PC-9 (cell line): ENCODE measurements at regions of chr21 and their contacts with region 1.

Region 1: GRCh38 chr21:33608559-33608958 is 20.1 kb upstream of the DONSON start:
- DNase-seq: no peak
- H3K4me3 ChIP-seq: no peak overlapping the region
- H3K27ac ChIP-seq: no peak overlapping the region
- H3K4me1 ChIP-seq: no peaks in the 10 kb centered on the region; the same call in 1 of the 2 replicates
- H3K27me3 ChIP-seq: no peaks in the 10 kb centered on the region
- CTCF ChIP-seq: no peak

Region 2: GRCh38 chr21:33531007-33531406 is 77.6 kb before region 1 on chr21:
- CTCF ChIA-PET with region 1: no interaction called
- POLR2A ChIA-PET with region 1: no interaction called
- intact Hi-C with region 1: no loop called
- DNase-seq: no peak
- H3K4me3 ChIP-seq: no peak overlapping the region
- H3K27ac ChIP-seq: no peak overlapping the region
- H3K4me1 ChIP-seq: no peaks in the 10 kb centered on the region
- H3K27me3 ChIP-seq: no peaks in the 10 kb centered on the region
- CTCF ChIP-seq: no peak

Region 3: GRCh38 chr21:33655591-33656221 is 47.1 kb after region 1 on chr21:
- CTCF ChIA-PET with region 1: no interaction called
- POLR2A ChIA-PET with region 1: no interaction called
- intact Hi-C with region 1: no loop called
- DNase-seq: peak; percentile 63 to 96
- H3K4me3 ChIP-seq: no peak overlapping the region; the same call in 1 of the 2 replicates
- H3K27ac ChIP-seq: peak overlapping the region; percentile 73
- H3K4me1 ChIP-seq: peaks cover 14% of the 10 kb centered on the region
- H3K27me3 ChIP-seq: no peaks in the 10 kb centered on the region
- CTCF ChIP-seq: no peak

Region 4: DNA sequence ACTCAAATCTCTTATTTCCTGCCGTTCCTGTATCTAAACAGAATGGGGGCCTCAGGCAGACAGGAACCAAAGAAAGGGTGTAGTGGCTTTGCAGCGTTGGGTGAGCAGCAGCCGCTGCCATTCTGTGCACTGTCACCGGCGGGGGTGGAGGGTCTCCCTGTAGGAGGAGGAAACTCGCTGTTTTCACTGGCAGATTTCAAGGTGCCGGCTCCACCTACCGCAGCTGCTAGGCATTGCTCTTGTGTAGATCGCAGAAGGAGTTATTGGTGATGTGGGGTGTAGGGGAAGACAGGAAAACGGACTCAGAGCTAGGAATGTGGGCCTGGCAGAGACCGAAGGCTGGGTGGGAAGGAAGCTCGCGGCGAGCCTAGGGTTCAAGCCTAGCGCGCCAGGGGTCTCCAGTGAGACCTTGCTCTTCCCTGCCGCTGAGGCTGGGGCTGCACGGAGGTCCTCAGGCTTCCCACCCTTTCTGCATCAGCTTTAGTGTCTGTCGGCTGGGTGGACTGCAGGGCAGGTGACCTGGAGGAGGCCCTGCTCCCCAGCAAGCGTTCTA is 286.3 kb after region 1 on chr21:
- CTCF ChIA-PET with region 1: no interaction called
- POLR2A ChIA-PET with region 1: no interaction called
- intact Hi-C with region 1: loop called (anchors 5 kb)
- DNase-seq: peak in 1 of 2 experiments; percentile 66
- H3K4me3 ChIP-seq: no peak overlapping the region
- H3K27ac ChIP-seq: no peak overlapping the region
- H3K4me1 ChIP-seq: 0 out of 2 replicates have a peak, but pooled peaks cover 7% of the 10 kb centered on the region
- H3K27me3 ChIP-seq: no peaks in the 10 kb centered on the region
- CTCF ChIP-seq: peak; percentile 63